ENCODE measurements at regions of chr2 and their contacts with region 1.

Region 1: GRCh38 chr2:73085691-73086360 is 14.3 kb upstream of the SFXN5 start:
- DNase-seq: peak; percentile 71 to 98 (median 90)

Region 2: DNA sequence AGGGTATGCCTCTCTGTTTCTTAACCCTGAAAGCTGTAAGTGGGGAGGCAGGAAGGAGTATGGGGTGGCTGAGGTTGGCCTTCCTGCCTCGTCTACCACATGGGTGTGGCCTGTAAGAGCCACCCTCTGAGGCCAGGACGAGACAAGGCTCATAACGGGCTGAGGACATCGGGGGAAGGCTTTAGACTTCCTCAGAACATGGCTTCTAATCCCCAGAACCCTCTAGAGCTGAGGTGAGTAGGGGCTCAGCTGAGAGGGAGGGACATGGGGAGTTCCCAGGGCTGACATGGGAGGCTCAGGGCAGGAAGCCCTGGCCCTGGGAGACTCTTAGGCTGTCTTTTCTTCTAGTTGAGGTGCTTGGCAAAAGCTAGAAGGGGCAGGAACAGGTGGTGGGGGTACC is 131.8 kb before region 1 on chr2:
- intact Hi-C with region 1: no loop called
- DNase-seq: no peak

Region 3: DNA sequence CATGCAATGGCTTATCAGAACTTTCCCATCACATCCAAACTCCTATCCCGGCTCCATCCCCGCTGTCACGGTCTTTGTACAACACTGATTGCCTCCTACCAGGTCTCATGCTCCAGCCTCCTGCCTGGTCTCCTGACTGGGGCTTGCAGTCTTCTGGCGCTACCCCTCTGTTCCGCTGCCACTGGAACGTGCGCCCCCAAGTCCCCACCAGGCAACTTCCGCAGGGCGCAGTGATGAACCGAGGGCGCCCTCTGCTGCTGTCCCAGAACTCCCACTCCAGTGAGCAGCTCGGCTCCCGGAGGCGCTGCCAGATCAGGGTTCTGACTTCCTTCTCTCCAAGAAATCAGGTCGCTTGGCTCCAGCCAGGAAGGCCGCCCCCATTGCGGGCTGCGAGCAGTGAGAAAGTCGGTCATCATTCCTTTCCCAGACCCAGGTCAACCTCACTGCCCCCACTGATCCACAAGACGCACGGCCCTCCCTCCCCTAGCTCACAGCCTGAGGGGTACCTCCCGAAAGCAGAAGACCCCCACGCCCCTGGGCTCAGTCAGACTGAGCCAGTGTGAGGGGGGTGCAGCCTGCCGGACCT is 70.8 kb after region 1 on chr2:
- intact Hi-C with region 1: loop called (anchors 2 kb)
- DNase-seq: peak; percentile 58 to 96 (median 76)

Region 4: GRCh38 chr2:73163483-73164367 is 77.9 kb after region 1 on chr2:
- intact Hi-C with region 1: loop called (anchors 2 kb)
- DNase-seq: peak; percentile 52 to 96 (median 74)

Region 5: GRCh38 chr2:73176881-73177644 is 91.2 kb after region 1 on chr2:
- intact Hi-C with region 1: loop called (anchors 1 kb)
- DNase-seq: peak; percentile 80 to 98 (median 91)

Region 6: DNA sequence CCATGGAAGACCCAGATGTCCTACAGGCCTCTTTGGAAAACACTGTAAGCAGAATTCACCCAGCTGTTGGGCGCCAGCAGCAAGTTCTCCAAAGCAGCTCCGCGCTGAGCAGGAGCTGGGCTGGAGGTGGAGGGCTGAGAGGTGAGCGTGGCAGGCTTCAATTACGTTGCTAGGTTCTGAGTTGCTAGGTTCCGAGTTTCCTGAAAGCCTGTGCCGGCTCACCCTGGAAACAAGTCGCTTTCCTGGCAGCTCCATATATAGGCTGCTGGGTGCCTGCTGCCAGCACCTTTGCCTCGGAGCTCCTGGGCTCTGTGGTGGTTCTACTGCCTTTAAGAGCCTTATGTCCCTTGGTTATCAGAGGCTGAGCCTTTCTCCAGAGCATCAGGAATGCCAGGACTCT is 221.9 kb after region 1 on chr2:
- intact Hi-C with region 1: no loop called
- DNase-seq: peak in 2 of 10 donors; percentile 59 to 84